Heart right ventricle (tissue), 16 donors: ENCODE measurements at regions of chr12 and their contacts with region 1.

Region 1: DNA sequence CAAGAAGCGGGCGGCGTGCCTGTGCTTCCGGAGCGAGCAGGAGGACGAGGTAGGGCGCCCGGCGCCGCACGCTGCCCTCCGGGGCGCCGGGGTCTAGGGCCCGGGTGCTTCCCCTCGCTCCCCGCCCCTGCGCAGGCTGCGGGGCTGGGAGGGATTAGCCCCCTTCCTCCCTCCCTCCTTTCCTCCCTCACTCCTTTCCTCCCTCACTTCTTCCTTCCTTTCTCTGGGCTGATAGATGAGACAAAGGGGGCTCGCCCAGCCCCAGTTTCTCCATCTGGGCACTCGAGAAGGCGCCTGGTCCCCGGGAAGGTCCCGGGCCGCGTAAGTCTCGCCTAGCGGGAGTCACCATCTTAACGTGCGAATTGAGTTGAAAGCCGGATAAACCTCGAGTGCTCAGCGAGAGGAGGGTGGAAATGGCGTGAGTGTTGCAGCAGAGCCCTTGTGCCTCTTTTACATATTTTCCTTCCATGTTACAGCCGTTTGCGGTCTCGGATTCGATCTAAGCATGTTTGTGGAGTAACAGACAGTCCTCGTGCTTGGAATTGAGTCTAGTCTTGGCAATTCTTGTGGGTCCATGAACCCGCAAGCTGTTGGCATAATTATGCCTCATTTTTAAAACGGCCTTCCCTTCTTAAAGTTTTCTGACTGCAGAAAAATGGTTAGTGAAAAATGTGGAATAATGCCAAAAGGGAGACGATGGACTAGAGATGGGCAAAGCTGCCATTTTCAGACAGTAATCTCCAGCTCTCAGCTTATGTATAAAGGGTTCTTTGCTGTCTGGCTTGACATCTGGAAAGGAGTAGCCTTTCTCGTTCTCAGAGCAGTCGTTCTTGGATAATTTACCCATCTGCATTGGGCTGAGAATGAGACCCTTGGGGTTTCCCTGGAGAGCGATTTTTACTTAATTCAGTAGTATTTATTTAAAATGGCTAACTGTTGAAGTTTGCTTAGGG is 924 bp downstream of the NUDT4 start:
- DNase-seq: peak in 1 of 2 donors; percentile 36
- ATAC-seq: peak in 6 of 8 donors; percentile 1 to 10 (median 6)
- H3K4me3 ChIP-seq: peak overlapping the region; percentile 77 to 93 (median 84)
- H3K27ac ChIP-seq: peak overlapping the region; percentile 85 to 97 (median 94)
- H3K4me1 ChIP-seq: peaks cover 0 to 75% (median 44%) of the 10 kb centered on the region in 9 donors
- H3K27me3 ChIP-seq: no peaks in the 10 kb centered on the region
- CTCF ChIP-seq: no peak

Region 2: DNA sequence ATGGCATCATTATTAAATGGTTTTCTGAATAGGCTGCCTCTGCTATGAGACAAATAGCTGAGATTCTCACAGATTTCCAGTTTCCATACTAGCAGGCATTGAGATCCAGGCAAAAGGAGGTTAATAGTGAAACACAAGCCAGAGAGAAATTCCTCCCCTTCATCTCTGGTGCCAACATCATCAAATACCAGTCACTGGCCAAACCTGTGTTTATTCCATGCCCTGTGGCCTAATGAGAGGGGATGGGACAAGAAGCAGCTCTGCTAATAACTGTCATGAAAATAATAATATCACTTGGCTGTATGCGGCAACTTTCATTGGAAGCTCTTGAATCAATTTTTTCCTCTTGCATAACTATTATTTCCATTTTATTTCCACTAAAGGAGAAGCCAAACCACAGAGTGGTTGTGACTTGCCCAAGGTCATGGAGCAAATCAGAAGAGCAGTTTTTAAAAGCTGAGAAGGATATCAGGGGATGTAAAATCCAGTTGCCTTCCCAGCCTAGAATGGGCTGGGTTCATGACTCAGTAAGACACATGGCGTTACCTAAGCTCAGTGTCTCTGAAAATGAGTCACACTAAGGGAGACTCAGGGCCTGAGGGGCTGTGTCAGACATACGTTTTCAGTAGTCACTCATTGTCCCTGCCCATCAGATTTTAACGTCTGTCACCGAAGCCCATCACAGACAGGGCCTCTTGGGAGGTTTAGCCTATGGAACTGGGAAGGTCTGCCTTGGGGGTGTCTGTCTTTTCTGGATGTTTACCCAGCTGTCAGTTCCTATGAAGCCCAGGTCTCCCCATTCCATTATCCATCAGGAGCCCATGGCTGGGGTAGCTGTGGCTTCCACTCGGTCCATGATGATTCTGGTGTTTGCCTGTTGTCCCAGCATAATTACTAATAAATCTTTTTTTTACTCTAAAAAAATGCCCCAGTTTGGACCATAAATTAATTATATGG is 240.7 kb before region 1 on chr12:
- intact Hi-C with region 1: loop called in 1 of 10 experiments (anchors 10 kb)
- DNase-seq: no peak
- ATAC-seq: peak in 7 of 8 donors; percentile 22 to 71 (median 61)
- H3K4me3 ChIP-seq: no peak overlapping the region
- H3K27ac ChIP-seq: peak overlapping the region in 7 of 10 donors; percentile 17 to 68 (median 42)
- H3K4me1 ChIP-seq: peaks cover 0 to 55% (median 18%) of the 10 kb centered on the region in 9 donors
- H3K27me3 ChIP-seq: no peaks in the 10 kb centered on the region
- CTCF ChIP-seq: no peak

Region 3: GRCh38 chr12:93174048-93174447 is 204.6 kb before region 1 on chr12:
- intact Hi-C with region 1: loop called in 1 of 10 experiments (anchors 5 kb)
- DNase-seq: peak in 1 of 2 donors; percentile 35
- ATAC-seq: peak; percentile 63 to 86 (median 74)
- H3K4me3 ChIP-seq: no peak overlapping the region
- H3K27ac ChIP-seq: peak overlapping the region; percentile 3 to 87 (median 76)
- H3K4me1 ChIP-seq: peaks cover 8 to 57% (median 36%) of the 10 kb centered on the region in 9 donors
- H3K27me3 ChIP-seq: no peaks in the 10 kb centered on the region
- CTCF ChIP-seq: no peak

Region 4: DNA sequence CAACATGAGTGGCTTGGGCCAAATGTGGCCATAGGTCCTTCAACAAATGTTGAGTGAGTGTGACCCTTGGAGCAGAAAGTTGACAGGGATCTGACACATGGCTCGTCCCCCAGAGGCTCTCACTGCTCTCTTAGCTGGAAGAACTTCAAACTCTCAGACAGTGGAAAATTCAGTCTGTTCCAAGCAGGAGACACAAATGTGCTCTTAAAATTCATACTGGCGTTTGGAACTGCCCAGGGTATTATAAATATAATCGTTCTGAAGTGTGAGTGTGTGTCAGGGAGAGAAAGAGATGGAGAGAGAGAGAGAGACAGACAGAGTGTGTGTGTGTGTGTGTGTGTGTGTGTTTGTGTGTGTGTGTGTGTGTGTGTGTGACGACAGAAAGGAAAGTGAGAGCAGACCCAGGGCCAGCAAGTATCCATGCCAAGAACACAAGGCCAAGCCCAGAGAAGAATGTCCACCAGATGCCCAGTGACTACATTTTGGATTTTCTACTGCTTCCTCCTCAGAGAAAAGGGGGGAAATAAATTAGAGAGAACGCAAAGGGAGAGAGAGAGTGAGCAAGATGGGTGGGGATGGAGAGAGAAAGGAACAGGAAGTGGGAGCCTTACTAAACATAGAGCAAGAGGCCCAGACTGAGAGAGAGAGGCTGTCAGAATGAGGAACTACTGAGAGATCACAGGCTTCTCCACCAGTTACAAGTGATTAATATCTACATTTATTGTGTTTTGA is 194.5 kb before region 1 on chr12:
- intact Hi-C with region 1: loop called in 4 of 10 experiments (anchors 5 to 10 kb)
- DNase-seq: peak in 1 of 2 donors; percentile 65
- ATAC-seq: peak; percentile 66 to 92 (median 86)
- H3K4me3 ChIP-seq: no peak overlapping the region
- H3K27ac ChIP-seq: peak overlapping the region; percentile 77 to 92 (median 88)
- H3K4me1 ChIP-seq: peaks cover 9 to 34% (median 24%) of the 10 kb centered on the region in 9 donors
- H3K27me3 ChIP-seq: no peaks in the 10 kb centered on the region
- CTCF ChIP-seq: no peak

Region 5: DNA sequence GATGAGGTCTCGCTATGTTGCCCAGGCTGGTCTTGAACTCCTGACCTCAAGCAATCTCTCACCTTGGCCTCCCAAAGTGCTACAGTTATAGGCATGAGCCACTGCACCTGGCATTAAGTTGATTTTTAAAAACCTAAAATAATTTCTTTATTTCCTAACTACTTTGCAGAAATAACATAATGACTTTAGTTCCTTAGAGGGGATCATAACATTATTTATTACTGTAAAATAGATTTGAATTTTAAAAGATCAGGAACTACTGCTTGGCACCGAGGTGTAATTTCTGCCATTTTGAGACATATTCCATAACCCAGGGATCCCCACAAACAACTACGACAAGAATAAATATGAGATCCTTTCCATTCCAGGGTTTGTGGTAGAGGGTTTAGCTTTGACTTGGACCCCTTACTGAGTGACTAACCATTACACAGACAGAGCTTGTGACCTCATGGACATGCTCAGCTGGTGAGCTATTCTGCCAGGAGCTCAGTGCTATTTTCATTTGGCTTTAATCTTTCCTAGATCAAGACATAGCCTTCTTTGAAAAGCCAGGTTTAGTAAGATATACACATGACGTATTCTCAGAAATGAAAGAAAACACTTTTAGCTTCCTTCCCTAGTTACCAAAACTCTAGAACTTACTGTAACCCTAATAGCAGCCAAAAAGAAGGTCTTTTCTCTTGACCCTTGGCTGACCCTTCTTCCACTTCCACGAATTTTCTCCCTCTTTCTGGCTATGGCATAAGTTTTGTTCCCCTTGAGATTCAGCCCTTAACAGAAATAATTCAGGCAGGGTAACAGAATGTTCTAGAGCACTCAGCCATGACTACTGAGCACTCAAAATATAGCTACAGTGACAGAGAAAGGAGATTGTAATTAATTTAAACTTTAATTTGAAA is 76.1 kb before region 1 on chr12:
- intact Hi-C with region 1: loop called in 3 of 10 experiments (anchors 2 to 10 kb)
- DNase-seq: peak in 1 of 2 donors; percentile 70
- ATAC-seq: peak; percentile 50 to 90 (median 81)
- H3K4me3 ChIP-seq: no peak overlapping the region
- H3K27ac ChIP-seq: peak overlapping the region; percentile 30 to 78 (median 62)
- H3K4me1 ChIP-seq: peaks cover 0 to 39% (median 26%) of the 10 kb centered on the region in 9 donors
- H3K27me3 ChIP-seq: no peaks in the 10 kb centered on the region
- CTCF ChIP-seq: no peak